Activated T-helper 1 cell treated with anti-CD3 and anti-CD28 coated beads, Interleukin-12 subunit alpha, Interleukin-12 subunit beta, Interleukin-2, Interleukin-4 antibody, amounts not matched to agents 30 ng/mL and 10 ng/mL and 1 ng/mL, durations not matched to agents 14 hours and 24 hours and 36 hours (primary cell): ENCODE measurements at regions of chr3 and their contacts with region 1.

Region 1: DNA sequence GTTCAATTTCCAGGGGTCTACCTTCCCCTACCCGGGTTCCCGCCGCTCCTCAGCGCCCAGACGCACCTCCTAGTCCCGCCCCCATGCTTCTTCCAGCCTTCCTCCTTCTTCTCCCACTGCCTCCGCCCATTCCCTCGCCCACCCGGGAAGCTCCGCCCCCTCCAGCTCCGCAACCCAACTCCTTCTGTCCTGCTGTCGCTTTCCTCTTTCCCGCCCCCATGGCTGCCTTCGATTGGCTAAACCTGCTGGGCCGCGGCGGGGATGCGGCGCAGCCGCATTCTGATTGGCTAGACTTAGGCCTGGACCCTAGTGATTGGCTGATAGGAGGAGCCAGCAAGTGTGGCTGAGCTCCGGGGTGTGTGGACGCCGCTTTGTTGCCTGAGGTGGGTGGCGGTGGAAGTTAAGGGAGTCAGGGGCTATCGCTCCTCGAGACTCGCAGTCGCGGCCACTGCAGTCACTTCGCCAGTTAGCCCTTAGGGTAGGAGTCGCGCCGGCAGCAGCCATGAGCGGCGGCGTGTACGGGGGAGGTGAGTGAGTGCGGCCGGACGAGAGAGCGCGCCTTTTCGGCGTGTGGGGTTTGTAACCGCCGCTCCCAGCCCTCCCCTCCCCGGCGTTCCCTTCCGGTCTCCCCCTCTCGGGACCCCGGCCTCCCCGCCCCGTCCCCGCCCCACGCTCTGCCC is at the start of gene ACTL6A:
- DNase-seq: peak; percentile 98
- H3K4me3 Mint-ChIP-seq: peak within 1 kb of the TSS; percentile 93
- H3K27ac Mint-ChIP-seq: peak within 1 kb of the TSS; percentile 99
- H3K4me1 Mint-ChIP-seq: peaks cover 34% of the 10 kb centered on the region
- H3K27me3 Mint-ChIP-seq: peaks cover 12% of the 10 kb centered on the region
- total RNA-seq, gene ACTL6A: 113 and 117 TPM in 2 replicates

Region 2: GRCh38 chr3:178436773-178437172 is 1126.0 kb before region 1 on chr3:
- intact Hi-C with region 1: loop called (anchors 10 kb)
- DNase-seq: no peak
- H3K4me3 Mint-ChIP-seq: no peak overlapping the region
- H3K27ac Mint-ChIP-seq: no peak overlapping the region
- H3K4me1 Mint-ChIP-seq: no peaks in the 10 kb centered on the region
- H3K27me3 Mint-ChIP-seq: no peaks in the 10 kb centered on the region

Region 3: DNA sequence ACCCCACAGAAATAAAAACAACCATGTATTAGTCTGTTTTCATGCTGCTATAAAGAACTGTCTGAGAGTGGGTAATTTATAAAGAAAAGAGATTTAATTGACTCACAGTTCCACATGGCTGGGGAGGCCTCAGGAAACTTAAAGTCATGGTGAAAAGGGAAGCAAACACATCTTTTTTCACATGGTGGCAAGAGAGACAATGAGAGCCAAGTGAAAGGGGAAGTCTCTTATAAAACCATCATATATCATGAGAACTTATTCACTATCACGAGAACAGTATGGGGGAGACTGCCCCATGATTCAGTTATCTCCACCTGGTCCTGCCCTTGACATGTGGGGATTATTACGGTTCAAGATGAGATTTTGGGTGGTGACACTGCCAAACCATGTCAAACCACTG is 632.6 kb before region 1 on chr3:
- intact Hi-C with region 1: no loop called
- DNase-seq: no peak
- H3K4me3 Mint-ChIP-seq: no peak overlapping the region
- H3K27ac Mint-ChIP-seq: no peak overlapping the region
- H3K4me1 Mint-ChIP-seq: no peaks in the 10 kb centered on the region
- H3K27me3 Mint-ChIP-seq: no peaks in the 10 kb centered on the region

Region 4: GRCh38 chr3:179322286-179323196 is 240.2 kb before region 1 on chr3 and contains the start of gene ZNF639:
- intact Hi-C with region 1: loop called (anchors 1 kb)
- DNase-seq: peak; percentile 78
- H3K4me3 Mint-ChIP-seq: peak within 1 kb of the TSS; percentile 90
- H3K27ac Mint-ChIP-seq: peak within 1 kb of the TSS; percentile 92
- H3K4me1 Mint-ChIP-seq: peaks cover 32% of the 10 kb centered on the region
- H3K27me3 Mint-ChIP-seq: peaks cover 16% of the 10 kb centered on the region
- total RNA-seq, gene ZNF639: 36.2 and 37.0 TPM in 2 replicates

Region 5: GRCh38 chr3:179451265-179452175 is 111.2 kb before region 1 on chr3 and contains the start of gene GNB4:
- intact Hi-C with region 1: loop called (anchors 1 kb)
- DNase-seq: peak; percentile 58
- H3K4me3 Mint-ChIP-seq: peak within 1 kb of the TSS; percentile 89
- H3K27ac Mint-ChIP-seq: peak within 1 kb of the TSS; percentile 91
- H3K4me1 Mint-ChIP-seq: peaks cover 39% of the 10 kb centered on the region
- H3K27me3 Mint-ChIP-seq: peaks cover 51% of the 10 kb centered on the region
- total RNA-seq, gene GNB4: 13.9 and 15.4 TPM in 2 replicates

Region 6: DNA sequence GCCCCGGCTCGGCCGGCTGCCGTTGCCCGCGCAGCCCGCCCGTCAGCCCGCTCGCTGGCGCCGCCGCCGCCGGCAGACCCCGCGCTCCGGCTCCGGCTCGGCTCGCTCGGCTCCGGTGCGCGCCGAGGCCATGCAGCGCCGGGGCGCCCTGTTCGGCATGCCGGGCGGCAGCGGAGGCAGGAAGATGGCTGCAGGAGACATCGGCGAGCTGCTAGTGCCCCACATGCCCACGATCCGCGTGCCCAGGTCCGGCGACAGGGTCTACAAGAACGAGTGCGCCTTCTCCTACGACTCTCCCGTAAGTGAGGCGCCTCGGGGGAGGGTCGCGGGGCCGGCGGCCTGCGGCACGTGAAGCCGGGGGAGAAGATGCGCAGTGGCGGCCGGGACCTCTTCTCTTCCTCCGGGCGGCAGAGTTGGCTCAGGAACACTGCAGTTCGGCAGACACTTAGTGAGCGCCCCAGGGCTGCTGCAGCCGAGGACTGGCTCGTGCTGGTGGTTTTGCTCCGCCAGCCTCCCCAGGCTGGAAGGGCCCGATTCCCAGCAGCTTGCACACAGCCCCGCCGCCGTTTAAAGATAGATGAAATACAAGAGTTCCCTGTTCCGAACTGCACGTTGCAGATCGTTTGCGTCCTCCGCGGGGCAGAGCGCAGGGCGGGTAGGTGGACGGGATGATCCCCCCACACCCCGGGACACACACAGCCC is 90.5 kb after region 1 on chr3:
- intact Hi-C with region 1: loop called (anchors 1 kb)
- DNase-seq: peak; percentile 57
- H3K4me3 Mint-ChIP-seq: peak overlapping the region; percentile 93
- H3K27ac Mint-ChIP-seq: peak overlapping the region; percentile 87
- H3K4me1 Mint-ChIP-seq: peaks cover 27% of the 10 kb centered on the region
- H3K27me3 Mint-ChIP-seq: peaks cover 9% of the 10 kb centered on the region

Region 7: DNA sequence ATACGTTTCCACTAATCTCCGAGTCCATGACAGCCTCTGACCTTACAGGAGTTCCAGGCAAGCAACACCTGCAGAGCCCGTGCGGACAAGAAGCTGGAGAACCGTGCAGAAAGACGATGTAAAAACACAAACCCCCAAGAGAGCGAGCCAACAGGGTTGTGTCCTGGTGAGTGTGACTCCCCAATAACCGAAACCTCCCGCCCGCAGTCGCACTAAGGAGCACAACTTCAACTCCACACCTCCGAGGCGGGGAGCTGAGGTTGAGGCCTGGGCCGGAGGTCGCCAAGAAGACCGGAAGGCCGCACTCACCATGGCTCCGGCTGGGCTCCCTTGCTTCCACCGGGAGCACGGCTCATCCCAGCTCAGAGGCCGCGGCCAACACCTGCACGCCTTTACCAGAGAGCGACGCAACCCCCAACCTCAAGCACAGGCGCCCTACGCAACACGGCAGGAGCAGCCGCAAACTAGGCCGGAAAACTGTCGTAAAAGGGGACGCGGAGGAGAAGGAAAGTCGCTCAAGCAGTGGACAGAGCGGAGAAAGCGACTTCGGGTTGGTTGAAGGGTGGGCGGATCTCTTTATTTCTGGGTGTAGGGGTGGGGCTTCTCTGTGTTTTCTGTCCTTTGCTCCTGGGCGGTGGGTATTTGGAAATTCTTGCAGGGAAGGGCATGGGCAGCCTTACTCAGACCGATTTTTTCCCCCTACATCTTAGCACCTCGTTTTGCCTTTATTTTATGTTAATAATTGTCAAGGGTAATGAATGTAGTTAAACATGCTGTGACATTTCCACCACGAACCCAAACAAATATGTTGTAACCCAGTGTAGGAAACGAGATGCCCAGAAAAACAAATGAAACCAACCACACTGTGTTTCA is 1426.8 kb after region 1 on chr3 and contains the start of gene DNAJC19:
- intact Hi-C with region 1: loop called (anchors 1 kb)
- DNase-seq: peak; percentile 86
- H3K4me3 Mint-ChIP-seq: peak within 1 kb of the TSS; percentile 91
- H3K27ac Mint-ChIP-seq: peak within 1 kb of the TSS; percentile 88
- H3K4me1 Mint-ChIP-seq: peaks cover 14% of the 10 kb centered on the region
- H3K27me3 Mint-ChIP-seq: no peaks in the 10 kb centered on the region
- total RNA-seq, gene DNAJC19: 59.3 and 60.8 TPM in 2 replicates